Breast epithelium (tissue), 4 donors: ENCODE measurements at regions of chr13 and their contacts with region 1.

Region 1: GRCh38 chr13:57612568-57612967 is 19.0 kb upstream of the PCDH17 start:
- DNase-seq: no peak
- H3K4me3 ChIP-seq: no peak overlapping the region
- H3K27ac ChIP-seq: no peak overlapping the region
- H3K4me1 ChIP-seq: no peaks in the 10 kb centered on the region
- H3K27me3 ChIP-seq: peaks cover 0 to 3% of the 10 kb centered on the region in 2 donors
- CTCF ChIP-seq: no peak
- POLR2A ChIP-seq: no peak

Region 2: GRCh38 chr13:56351041-56351440 is 1261.5 kb before region 1 on chr13:
- intact Hi-C with region 1: no loop called
- DNase-seq: no peak
- H3K4me3 ChIP-seq: no peak overlapping the region
- H3K27ac ChIP-seq: no peak overlapping the region
- H3K4me1 ChIP-seq: no peaks in the 10 kb centered on the region
- H3K27me3 ChIP-seq: no peaks in the 10 kb centered on the region
- CTCF ChIP-seq: no peak
- POLR2A ChIP-seq: no peak

Region 3: DNA sequence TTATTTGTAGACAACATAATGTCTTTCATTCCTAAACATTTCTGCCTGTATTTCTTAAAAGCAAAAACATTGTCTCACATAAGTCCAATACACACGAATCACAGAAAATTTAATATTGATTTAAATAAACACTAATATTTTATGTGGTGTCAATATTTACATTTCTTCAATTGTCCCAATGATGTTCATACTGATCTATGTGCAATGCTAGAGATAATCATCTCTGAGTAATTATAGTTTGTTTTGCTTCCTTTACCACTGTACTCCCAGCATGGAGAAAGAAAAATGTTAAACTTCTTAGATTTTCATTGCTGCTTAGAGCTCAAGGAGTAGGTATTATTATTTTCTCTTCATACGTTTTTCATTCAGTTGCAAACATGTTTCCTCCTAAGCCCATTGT is 906.1 kb before region 1 on chr13:
- intact Hi-C with region 1: no loop called
- DNase-seq: no peak
- H3K4me3 ChIP-seq: no peak overlapping the region
- H3K27ac ChIP-seq: no peak overlapping the region
- H3K4me1 ChIP-seq: no peaks in the 10 kb centered on the region
- H3K27me3 ChIP-seq: no peaks in the 10 kb centered on the region
- CTCF ChIP-seq: no peak
- POLR2A ChIP-seq: no peak

Region 4: GRCh38 chr13:58032676-58033460 is 420.3 kb after region 1 on chr13:
- intact Hi-C with region 1: loop called (anchors 5 kb)
- DNase-seq: no peak
- H3K4me3 ChIP-seq: no peak overlapping the region
- H3K27ac ChIP-seq: no peak overlapping the region
- H3K4me1 ChIP-seq: no peaks in the 10 kb centered on the region
- H3K27me3 ChIP-seq: no peaks in the 10 kb centered on the region
- CTCF ChIP-seq: no peak
- POLR2A ChIP-seq: no peak